ENCODE measurements at regions of chr6 and their contacts with region 1.

Region 1: GRCh38 chr6:149316798-149317655 is 485 bp upstream of the TAB2 start:
- DNase-seq: peak; percentile 57
- ATAC-seq: peak; percentile 79
- H3K4me3 ChIP-seq: peak overlapping the region; percentile 97
- H3K27ac ChIP-seq: peak overlapping the region; percentile 96
- H3K4me1 ChIP-seq: peaks cover 3% of the 10 kb centered on the region; the same call in 1 of the 2 replicates
- H3K27me3 ChIP-seq: no peaks in the 10 kb centered on the region
- CTCF ChIP-seq: 0 out of 6 replicates have a peak, but pooled peaks of 1 of the 3 experiments have one; percentile 2
- EP300 ChIP-seq: no peak
- POLR2A ChIP-seq: peak; percentile 86
- RAD21 ChIP-seq: 0 out of 2 replicates have a peak, but pooled peaks have one; percentile 28

Region 2: DNA sequence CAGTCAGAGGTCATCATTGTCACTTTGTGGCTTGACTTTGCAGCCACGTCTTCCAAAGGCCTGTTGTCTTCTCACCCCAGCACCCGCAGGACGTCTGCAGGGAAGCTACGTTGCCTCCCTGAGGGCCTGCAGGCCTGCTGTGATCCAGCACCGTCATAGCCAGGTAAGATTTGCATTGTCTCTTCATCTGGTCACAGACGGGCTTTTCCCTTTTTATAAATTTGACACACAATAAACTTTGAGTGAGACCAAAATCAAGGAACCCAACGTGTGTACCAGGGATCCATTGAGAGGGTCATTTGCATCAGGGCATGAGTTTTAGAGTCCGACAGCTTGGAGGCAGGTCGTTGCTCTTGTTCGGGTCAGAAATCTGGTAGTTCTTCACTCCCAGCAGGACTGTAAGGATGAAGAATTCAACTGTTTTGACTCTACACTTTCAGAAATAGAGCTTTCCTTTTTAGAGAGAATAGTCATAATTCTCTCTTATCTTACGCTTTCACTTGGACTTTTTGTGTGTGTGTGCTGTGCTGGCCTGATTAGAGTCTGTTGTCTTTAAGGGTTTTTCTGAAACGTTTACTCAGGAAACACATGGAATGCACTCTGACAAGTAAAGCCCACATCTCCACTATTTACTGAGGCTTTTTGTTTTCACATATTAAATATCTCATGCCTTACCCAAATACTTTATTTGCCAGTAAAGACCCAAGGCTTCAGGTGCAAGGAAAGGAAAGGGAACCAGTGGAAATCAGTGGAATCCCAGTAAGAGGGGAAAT is 176.7 kb before region 1 on chr6:
- CTCF ChIA-PET with region 1: no interaction called
- POLR2A ChIA-PET with region 1: interaction called, 3 read pairs
- RAD21 ChIA-PET with region 1: interaction called, 3 read pairs
- SMC1A ChIA-PET with region 1: interaction called, 5 read pairs
- in situ Hi-C with region 1: no loop called
- intact Hi-C with region 1: loop called (anchors 2 kb)
- DNase-seq: peak; percentile 65
- ATAC-seq: peak; percentile 94
- H3K4me3 ChIP-seq: peak overlapping the region; percentile 17; the same call in 1 of the 2 replicates
- H3K27ac ChIP-seq: peak overlapping the region; percentile 98
- H3K4me1 ChIP-seq: peaks cover 25% of the 10 kb centered on the region
- H3K27me3 ChIP-seq: no peaks in the 10 kb centered on the region
- CTCF ChIP-seq: no peak
- EP300 ChIP-seq: peak; percentile 80 to 84; a peak in 3 of 4 replicates
- POLR2A ChIP-seq: peak; percentile 72
- RAD21 ChIP-seq: peak; percentile 16; the same call in 1 of the 2 replicates

Region 3: DNA sequence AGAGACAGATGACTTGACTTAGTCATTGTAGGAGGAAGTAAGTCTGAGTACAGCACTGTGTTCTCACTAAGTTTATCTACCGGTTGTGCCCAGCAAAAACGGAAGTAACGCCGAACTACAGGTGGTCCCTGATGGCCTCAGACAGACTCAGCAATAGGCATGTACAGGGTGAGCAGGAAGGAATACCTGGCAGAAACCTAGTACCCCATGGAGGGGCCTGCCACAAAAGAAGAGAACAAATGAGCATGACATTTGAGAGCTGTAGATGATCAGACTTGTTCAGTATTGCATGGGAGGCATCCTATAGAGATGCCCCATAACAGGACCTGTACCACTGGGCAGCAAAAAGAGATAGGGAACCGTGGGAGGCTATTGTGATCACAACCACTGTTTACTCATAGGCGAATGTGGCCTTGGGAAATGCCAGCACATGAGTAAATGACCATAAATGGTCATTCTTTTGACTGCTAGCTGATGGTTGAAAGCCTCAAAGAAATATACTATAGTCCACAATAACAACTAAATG is 105.9 kb before region 1 on chr6:
- CTCF ChIA-PET with region 1: no interaction called
- POLR2A ChIA-PET with region 1: no interaction called
- RAD21 ChIA-PET with region 1: no interaction called
- SMC1A ChIA-PET with region 1: interaction called, 22 read pairs
- in situ Hi-C with region 1: no loop called
- intact Hi-C with region 1: loop called (anchors 2 kb)
- DNase-seq: no peak
- ATAC-seq: peak; percentile 66
- H3K4me3 ChIP-seq: no peak overlapping the region
- H3K27ac ChIP-seq: peak overlapping the region; percentile 64
- H3K4me1 ChIP-seq: peaks cover 43% of the 10 kb centered on the region
- H3K27me3 ChIP-seq: no peaks in the 10 kb centered on the region
- CTCF ChIP-seq: no peak
- EP300 ChIP-seq: no peak
- POLR2A ChIP-seq: no peak
- RAD21 ChIP-seq: no peak

Region 4: DNA sequence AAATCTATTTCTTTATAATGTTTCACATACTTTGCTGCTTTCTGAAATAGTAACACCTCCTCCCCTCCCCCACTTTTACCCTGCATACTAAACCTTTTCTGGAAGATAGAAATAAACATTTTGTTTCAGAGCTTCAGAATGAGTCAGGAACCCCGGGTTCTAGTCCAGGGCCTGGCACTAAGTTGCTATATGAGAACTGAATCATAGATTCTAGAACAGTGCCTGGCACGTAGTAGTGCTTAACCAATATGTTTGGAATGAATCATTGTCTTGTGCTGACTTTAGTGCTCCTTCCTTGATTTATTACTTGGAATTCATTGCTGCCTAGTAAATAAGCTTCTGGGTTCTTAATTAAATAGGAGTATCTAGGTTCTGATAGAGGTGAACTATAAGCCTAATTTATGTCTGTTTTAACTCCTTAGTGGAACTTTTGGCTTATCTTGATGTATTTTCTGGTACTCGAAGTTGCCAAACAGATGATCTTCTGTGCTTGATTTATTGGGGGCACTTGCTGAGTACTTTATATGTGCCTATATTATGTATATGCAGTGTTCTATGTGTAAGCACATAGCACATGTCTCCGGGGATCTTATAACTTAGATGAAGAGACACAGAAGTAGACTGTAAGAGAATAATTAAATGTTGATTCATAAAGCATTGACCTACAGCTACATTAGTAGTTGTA is 19.0 kb after region 1 on chr6:
- CTCF ChIA-PET with region 1: interaction called, 56 read pairs
- POLR2A ChIA-PET with region 1: interaction called, 13 read pairs
- RAD21 ChIA-PET with region 1: interaction called, 74 read pairs
- SMC1A ChIA-PET with region 1: interaction called, 199 read pairs
- in situ Hi-C with region 1: no loop called
- intact Hi-C with region 1: loop called (anchors 2 kb)
- DNase-seq: no peak
- ATAC-seq: peak; percentile 50
- H3K4me3 ChIP-seq: peak overlapping the region; percentile 32; the same call in 1 of the 2 replicates
- H3K27ac ChIP-seq: peak overlapping the region; percentile 73
- H3K4me1 ChIP-seq: peaks cover 36% of the 10 kb centered on the region
- H3K27me3 ChIP-seq: no peaks in the 10 kb centered on the region
- CTCF ChIP-seq: no peak
- EP300 ChIP-seq: no peak
- POLR2A ChIP-seq: no peak
- RAD21 ChIP-seq: no peak